A549 (cell line): ENCODE measurements at regions of chr12 and their contacts with region 1.

Region 1: GRCh38 chr12:51424662-51425438 is at the start of gene SLC4A8:
- DNase-seq: peak; percentile 80 to 96
- ATAC-seq: peak; percentile 96 to 98
- H3K4me3 ChIP-seq: peak within 1 kb of the TSS; percentile 65
- H3K27ac ChIP-seq: peak within 1 kb of the TSS in 1 of 2 experiments; percentile 75; a peak in 3 of 6 replicates
- H3K4me1 ChIP-seq: peaks cover 5% of the 10 kb centered on the region
- CTCF ChIP-seq: peak; percentile 90
- EP300 ChIP-seq: no peak
- POLR2A ChIP-seq: no peak
- RAD21 ChIP-seq: peak; percentile 56 to 79
- polyA plus RNA-seq, gene SLC4A8: 1.7 and 2.3 TPM in 2 replicates

Region 2: DNA sequence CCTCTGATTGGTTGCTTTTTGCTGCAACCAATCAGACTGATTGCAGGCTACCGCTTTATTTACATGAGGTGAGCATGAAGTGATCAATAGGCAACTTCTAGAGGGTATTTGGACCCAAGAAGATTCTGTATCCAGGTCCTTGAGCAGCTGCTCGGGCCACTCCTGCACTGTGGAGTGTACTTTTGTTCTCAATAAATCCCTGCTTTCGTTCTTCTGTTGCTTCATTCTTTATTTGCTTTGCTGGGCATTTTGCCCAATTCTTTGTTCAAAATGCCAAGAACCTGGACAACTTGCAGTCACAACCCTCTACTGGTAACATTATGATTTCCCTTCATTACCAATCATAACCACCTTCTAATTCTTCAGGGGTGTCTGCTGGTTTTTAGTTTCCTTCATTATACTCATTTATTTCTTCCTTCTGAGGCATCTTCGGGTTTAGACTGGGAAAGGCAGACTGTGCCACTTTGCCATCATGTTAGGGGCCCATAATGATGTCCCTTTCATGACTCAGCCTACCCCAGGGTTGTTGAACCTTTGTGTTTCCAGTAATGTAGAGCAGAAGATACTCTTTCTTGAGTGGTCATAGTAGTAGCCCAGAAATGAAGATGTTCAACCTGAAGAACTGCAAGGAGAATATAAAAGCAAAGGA is 1098.1 kb before region 1 on chr12:
- CTCF ChIA-PET with region 1: no interaction called
- POLR2A ChIA-PET with region 1: no interaction called
- DNase-seq: peak in 1 of 2 experiments; percentile 75
- ATAC-seq: peak; percentile 59 to 79
- H3K4me3 ChIP-seq: peak overlapping the region; percentile 14; the same call in 1 of the 3 replicates
- H3K27ac ChIP-seq: peak overlapping the region; percentile 73 to 85
- H3K4me1 ChIP-seq: peaks cover 27% of the 10 kb centered on the region
- CTCF ChIP-seq: peak; percentile 11; the same call in 1 of the 3 replicates
- EP300 ChIP-seq: no peak
- POLR2A ChIP-seq: no peak
- RAD21 ChIP-seq: peak; percentile 17 to 45; a peak in 3 of 5 replicates

Region 3: DNA sequence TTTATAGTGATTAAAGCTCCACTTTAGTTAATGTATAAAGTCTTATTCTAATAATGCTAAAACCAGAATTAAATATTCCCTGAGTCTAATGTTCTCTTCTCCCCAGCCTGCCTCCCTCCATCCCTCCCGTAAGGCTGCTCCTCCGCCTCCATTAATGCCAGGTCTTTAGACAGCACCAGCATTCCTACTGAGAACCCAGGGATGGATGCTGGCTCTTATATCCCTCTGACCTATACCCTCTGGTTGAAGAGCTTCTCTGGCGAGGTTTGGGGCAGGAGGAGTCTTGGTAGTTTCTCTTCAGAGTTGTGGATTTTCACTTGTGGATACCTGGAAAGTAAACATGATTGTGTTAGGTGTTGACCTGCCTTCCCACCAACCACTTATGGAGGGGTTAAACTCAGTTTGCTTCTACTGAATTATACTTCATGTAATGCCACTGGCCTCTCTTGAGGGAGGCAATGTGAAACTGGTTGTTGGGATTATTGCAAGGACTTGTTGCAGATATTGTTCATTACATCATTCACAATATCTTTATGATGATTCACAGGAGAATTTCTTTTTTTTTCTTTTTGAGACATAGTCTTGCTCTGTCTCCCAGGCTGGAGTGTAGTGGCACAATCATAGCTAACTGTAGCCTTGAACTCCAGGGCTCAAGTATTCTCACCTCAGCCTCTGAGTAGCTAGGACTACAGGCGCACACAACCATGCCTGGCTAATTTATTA is 143.5 kb before region 1 on chr12:
- CTCF ChIA-PET with region 1: no interaction called
- POLR2A ChIA-PET with region 1: no interaction called
- DNase-seq: peak in 1 of 2 experiments; percentile 16
- ATAC-seq: peak; percentile 59 to 61
- H3K4me3 ChIP-seq: no peak overlapping the region
- H3K27ac ChIP-seq: peak overlapping the region; percentile 26 to 65; a peak in 4 of 6 replicates
- H3K4me1 ChIP-seq: peaks cover 14% of the 10 kb centered on the region; the same call in 2 of the 3 replicates
- CTCF ChIP-seq: no peak
- EP300 ChIP-seq: no peak
- POLR2A ChIP-seq: no peak
- RAD21 ChIP-seq: no peak

Region 4: DNA sequence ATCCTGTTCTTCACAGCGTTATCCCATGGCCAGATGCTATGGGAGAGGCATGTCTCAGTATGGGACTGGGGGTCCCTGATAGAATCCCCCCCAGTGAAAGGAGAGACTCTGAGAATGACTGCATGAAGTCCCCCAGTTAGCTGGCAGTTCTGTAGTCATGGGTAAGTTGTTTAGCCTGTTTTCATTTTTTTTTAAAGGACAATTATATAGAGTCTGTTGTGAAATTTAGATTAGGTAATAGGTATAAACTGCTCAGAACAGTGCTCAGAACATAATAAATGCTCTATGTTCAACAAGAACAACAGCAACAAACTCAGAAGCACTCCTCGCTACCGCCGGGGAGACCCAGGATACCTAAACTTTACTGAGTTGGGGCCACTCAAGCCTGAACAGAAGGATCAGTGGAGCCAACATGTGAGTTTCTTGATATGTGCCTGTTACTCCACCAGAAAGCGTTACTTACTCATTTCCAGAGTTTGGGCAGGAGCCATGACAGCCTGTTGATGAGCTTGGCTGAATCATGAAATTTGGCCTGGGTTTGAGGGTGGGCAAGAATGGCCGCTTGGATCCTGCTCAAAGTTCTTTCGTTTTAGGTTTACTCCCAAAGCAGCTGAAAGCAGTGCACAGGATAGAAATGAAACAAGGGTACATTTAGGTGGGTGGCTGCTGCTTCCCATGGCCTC is 21.8 kb before region 1 on chr12:
- CTCF ChIA-PET with region 1: interaction called, 19 read pairs
- POLR2A ChIA-PET with region 1: no interaction called
- DNase-seq: no peak
- ATAC-seq: no peak
- H3K4me3 ChIP-seq: no peak overlapping the region
- H3K27ac ChIP-seq: no peak overlapping the region
- H3K4me1 ChIP-seq: no peaks in the 10 kb centered on the region
- CTCF ChIP-seq: no peak
- EP300 ChIP-seq: no peak
- POLR2A ChIP-seq: no peak
- RAD21 ChIP-seq: no peak

Region 5: GRCh38 chr12:51449577-51450246 is 24.9 kb after region 1 on chr12:
- CTCF ChIA-PET with region 1: interaction called, 10 read pairs
- POLR2A ChIA-PET with region 1: no interaction called
- DNase-seq: no peak
- ATAC-seq: peak in 1 of 2 experiments; percentile 23; a peak in 2 of 6 replicates
- H3K4me3 ChIP-seq: no peak overlapping the region
- H3K27ac ChIP-seq: no peak overlapping the region
- H3K4me1 ChIP-seq: peaks cover 3% of the 10 kb centered on the region; the same call in 1 of the 3 replicates
- CTCF ChIP-seq: no peak
- EP300 ChIP-seq: no peak
- POLR2A ChIP-seq: no peak
- RAD21 ChIP-seq: no peak

Region 6: DNA sequence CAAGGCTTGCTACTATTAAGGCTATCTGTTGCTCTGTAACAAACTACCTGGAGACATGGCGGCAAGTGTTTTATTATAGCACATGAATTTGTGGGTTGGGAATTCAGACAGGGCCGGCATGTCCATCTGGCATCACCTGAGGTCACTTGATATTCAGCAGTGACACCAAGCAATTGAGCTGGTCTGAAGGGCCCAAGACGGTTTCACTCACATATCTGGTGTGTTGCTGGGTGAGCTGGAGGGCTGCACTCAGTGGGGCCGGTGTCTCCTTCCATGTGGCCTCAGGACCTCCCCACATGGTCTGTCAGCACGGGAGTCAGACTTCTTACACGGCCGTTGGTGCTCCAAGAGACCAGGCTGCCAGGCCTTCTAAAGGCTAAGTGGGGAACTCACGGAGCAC is 113.7 kb after region 1 on chr12:
- CTCF ChIA-PET with region 1: interaction called, 245 read pairs
- POLR2A ChIA-PET with region 1: no interaction called
- DNase-seq: no peak
- ATAC-seq: no peak
- H3K4me3 ChIP-seq: no peak overlapping the region
- H3K27ac ChIP-seq: no peak overlapping the region
- H3K4me1 ChIP-seq: no peaks in the 10 kb centered on the region; the same call in 1 of the 3 replicates
- CTCF ChIP-seq: no peak
- EP300 ChIP-seq: no peak
- POLR2A ChIP-seq: no peak
- RAD21 ChIP-seq: no peak

Region 7: GRCh38 chr12:51801027-51801426 is 376.2 kb after region 1 on chr12:
- CTCF ChIA-PET with region 1: no interaction called
- POLR2A ChIA-PET with region 1: no interaction called
- DNase-seq: no peak
- ATAC-seq: no peak
- H3K4me3 ChIP-seq: no peak overlapping the region
- H3K27ac ChIP-seq: no peak overlapping the region
- H3K4me1 ChIP-seq: no peaks in the 10 kb centered on the region
- CTCF ChIP-seq: no peak
- EP300 ChIP-seq: no peak
- POLR2A ChIP-seq: no peak
- RAD21 ChIP-seq: no peak

Region 8: GRCh38 chr12:51823875-51824565 is 399.2 kb after region 1 on chr12:
- CTCF ChIA-PET with region 1: interaction called, 155 read pairs
- POLR2A ChIA-PET with region 1: interaction called, 11 read pairs
- DNase-seq: peak; percentile 70 to 85
- ATAC-seq: peak; percentile 30 to 67; a peak in 3 of 6 replicates
- H3K4me3 ChIP-seq: no peak overlapping the region
- H3K27ac ChIP-seq: no peak overlapping the region
- H3K4me1 ChIP-seq: peaks cover 24% of the 10 kb centered on the region
- CTCF ChIP-seq: peak; percentile 73
- EP300 ChIP-seq: no peak
- POLR2A ChIP-seq: no peak
- RAD21 ChIP-seq: peak; percentile 71 to 85

Region 9: GRCh38 chr12:51874013-51874412 is 449.2 kb after region 1 on chr12:
- CTCF ChIA-PET with region 1: interaction called, 69 read pairs
- POLR2A ChIA-PET with region 1: no interaction called
- DNase-seq: no peak
- ATAC-seq: no peak
- H3K4me3 ChIP-seq: no peak overlapping the region
- H3K27ac ChIP-seq: no peak overlapping the region
- H3K4me1 ChIP-seq: no peaks in the 10 kb centered on the region
- CTCF ChIP-seq: no peak
- EP300 ChIP-seq: no peak
- POLR2A ChIP-seq: no peak
- RAD21 ChIP-seq: no peak